ENCODE measurements at regions of chr2 and their contacts with region 1.

Region 1: DNA sequence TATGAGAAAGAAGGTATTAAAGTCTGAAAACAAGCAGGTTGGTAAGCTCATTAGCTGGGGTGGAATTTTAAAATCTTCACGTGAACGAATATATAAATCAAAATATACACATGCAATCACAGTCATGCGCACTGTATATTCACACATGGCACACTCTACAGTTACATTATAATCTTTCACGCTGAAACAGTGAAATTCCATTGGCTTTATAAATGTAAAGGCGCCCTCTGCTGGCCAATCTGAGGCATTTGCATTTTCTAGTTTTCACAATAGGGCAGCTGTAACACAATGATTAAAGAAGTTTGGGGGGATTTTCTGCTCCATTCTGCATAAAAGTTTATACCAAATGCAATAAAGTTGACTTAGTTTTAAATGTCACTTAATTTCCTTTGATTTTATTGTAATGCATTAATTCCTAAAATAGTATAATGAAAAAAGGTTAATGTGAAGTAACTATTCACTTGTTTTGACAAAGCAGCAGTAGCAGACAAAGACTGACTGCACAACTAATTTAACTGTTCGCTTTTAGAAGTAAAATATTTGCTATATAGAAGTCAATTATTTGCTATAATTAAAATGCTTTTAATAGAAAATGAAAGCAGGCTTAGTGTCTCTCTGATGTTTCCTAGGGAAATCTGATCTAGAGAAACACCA is 17.2 kb downstream of the IFIH1 start:
- DNase-seq: peak; percentile 44 to 61 (median 53)
- H3K4me3 ChIP-seq: no peak overlapping the region
- H3K4me3 Mint-ChIP-seq: no peak overlapping the region
- H3K27ac ChIP-seq: no peak overlapping the region
- H3K27ac Mint-ChIP-seq: no peak overlapping the region
- H3K4me1 ChIP-seq: peaks cover 6% of the 10 kb centered on the region
- H3K4me1 Mint-ChIP-seq: peaks cover 0 to 3% (median 2%) of the 10 kb centered on the region in 4 donors
- H3K27me3 ChIP-seq: no peaks in the 10 kb centered on the region
- H3K27me3 Mint-ChIP-seq: no peaks in the 10 kb centered on the region

Region 2: GRCh38 chr2:161586517-161587167 is 714.6 kb before region 1 on chr2:
- CTCF ChIA-PET with region 1: interaction called, 16 read pairs
- POLR2A ChIA-PET with region 1: no interaction called
- intact Hi-C with region 1: loop called (anchors 1 kb)
- DNase-seq: peak in 4 of 5 donors; percentile 23 to 33 (median 28)
- H3K4me3 ChIP-seq: no peak overlapping the region
- H3K4me3 Mint-ChIP-seq: no peak overlapping the region
- H3K27ac ChIP-seq: no peak overlapping the region
- H3K27ac Mint-ChIP-seq: no peak overlapping the region
- H3K4me1 ChIP-seq: no peaks in the 10 kb centered on the region
- H3K4me1 Mint-ChIP-seq: no peaks in the 10 kb centered on the region
- H3K27me3 ChIP-seq: no peaks in the 10 kb centered on the region
- H3K27me3 Mint-ChIP-seq: peaks cover 0 to 4% of the 10 kb centered on the region in 2 donors

Region 3: GRCh38 chr2:162221064-162221463 is 80.2 kb before region 1 on chr2:
- CTCF ChIA-PET with region 1: interaction called, 77 read pairs
- POLR2A ChIA-PET with region 1: no interaction called
- intact Hi-C with region 1: loop called (anchors 1 kb)
- DNase-seq: peak; percentile 27 to 52 (median 29)
- H3K4me3 ChIP-seq: no peak overlapping the region
- H3K4me3 Mint-ChIP-seq: no peak overlapping the region
- H3K27ac ChIP-seq: no peak overlapping the region
- H3K27ac Mint-ChIP-seq: no peak overlapping the region
- H3K4me1 ChIP-seq: no peaks in the 10 kb centered on the region
- H3K4me1 Mint-ChIP-seq: peaks cover 0 to 5% (median 1%) of the 10 kb centered on the region in 4 donors
- H3K27me3 ChIP-seq: no peaks in the 10 kb centered on the region
- H3K27me3 Mint-ChIP-seq: peaks cover 8 to 22% of the 10 kb centered on the region in 2 donors

Region 4: GRCh38 chr2:162285816-162286215 is 15.5 kb before region 1 on chr2:
- CTCF ChIA-PET with region 1: interaction called, 28 read pairs
- POLR2A ChIA-PET with region 1: no interaction called
- intact Hi-C with region 1: no loop called
- DNase-seq: no peak
- H3K4me3 ChIP-seq: no peak overlapping the region
- H3K4me3 Mint-ChIP-seq: no peak overlapping the region
- H3K27ac ChIP-seq: no peak overlapping the region
- H3K27ac Mint-ChIP-seq: peak overlapping the region in 1 of 7 donors; percentile 27
- H3K4me1 ChIP-seq: no peaks in the 10 kb centered on the region
- H3K4me1 Mint-ChIP-seq: peaks cover 0 to 2% (median 1%) of the 10 kb centered on the region in 4 donors
- H3K27me3 ChIP-seq: no peaks in the 10 kb centered on the region
- H3K27me3 Mint-ChIP-seq: no peaks in the 10 kb centered on the region

Region 5: GRCh38 chr2:162333968-162334367 is 32.7 kb after region 1 on chr2:
- CTCF ChIA-PET with region 1: interaction called, 14 read pairs
- POLR2A ChIA-PET with region 1: no interaction called
- intact Hi-C with region 1: no loop called
- DNase-seq: no peak
- H3K4me3 ChIP-seq: no peak overlapping the region
- H3K4me3 Mint-ChIP-seq: no peak overlapping the region
- H3K27ac ChIP-seq: no peak overlapping the region
- H3K27ac Mint-ChIP-seq: no peak overlapping the region
- H3K4me1 ChIP-seq: no peaks in the 10 kb centered on the region
- H3K4me1 Mint-ChIP-seq: no peaks in the 10 kb centered on the region
- H3K27me3 ChIP-seq: no peaks in the 10 kb centered on the region
- H3K27me3 Mint-ChIP-seq: no peaks in the 10 kb centered on the region

Region 6: DNA sequence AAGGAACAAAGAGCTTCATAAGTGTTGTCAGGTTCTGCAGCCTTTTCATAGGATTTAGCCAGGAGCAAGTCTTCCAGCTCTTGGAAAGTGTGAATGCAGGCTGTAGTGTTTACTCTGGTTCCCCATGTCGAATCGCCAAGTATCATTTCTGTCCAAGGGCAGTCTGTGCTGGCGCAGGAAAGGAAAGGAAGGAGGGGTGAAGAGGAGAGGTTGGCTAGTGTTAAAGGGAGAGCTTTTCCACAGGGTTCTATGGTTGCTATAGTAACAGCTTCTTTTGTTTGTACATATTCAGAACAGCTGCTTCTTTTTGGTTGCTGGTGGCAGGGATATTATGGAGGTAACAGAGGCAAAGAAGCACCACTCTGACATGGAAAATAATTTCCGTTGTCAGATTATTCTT is 467.4 kb after region 1 on chr2:
- CTCF ChIA-PET with region 1: no interaction called
- POLR2A ChIA-PET with region 1: no interaction called
- intact Hi-C with region 1: no loop called
- DNase-seq: no peak
- H3K4me3 ChIP-seq: no peak overlapping the region
- H3K4me3 Mint-ChIP-seq: no peak overlapping the region
- H3K27ac ChIP-seq: no peak overlapping the region
- H3K27ac Mint-ChIP-seq: no peak overlapping the region
- H3K4me1 ChIP-seq: no peaks in the 10 kb centered on the region
- H3K4me1 Mint-ChIP-seq: no peaks in the 10 kb centered on the region
- H3K27me3 ChIP-seq: no peaks in the 10 kb centered on the region
- H3K27me3 Mint-ChIP-seq: no peaks in the 10 kb centered on the region